ENCODE measurements at regions of chr1 and their contacts with region 1.

Region 1: GRCh38 chr1:156892190-156893047 is 1.1 kb upstream of the PEAR1 start:
- DNase-seq: peak; percentile 89
- CTCF ChIP-seq: peak; percentile 80

Region 2: DNA sequence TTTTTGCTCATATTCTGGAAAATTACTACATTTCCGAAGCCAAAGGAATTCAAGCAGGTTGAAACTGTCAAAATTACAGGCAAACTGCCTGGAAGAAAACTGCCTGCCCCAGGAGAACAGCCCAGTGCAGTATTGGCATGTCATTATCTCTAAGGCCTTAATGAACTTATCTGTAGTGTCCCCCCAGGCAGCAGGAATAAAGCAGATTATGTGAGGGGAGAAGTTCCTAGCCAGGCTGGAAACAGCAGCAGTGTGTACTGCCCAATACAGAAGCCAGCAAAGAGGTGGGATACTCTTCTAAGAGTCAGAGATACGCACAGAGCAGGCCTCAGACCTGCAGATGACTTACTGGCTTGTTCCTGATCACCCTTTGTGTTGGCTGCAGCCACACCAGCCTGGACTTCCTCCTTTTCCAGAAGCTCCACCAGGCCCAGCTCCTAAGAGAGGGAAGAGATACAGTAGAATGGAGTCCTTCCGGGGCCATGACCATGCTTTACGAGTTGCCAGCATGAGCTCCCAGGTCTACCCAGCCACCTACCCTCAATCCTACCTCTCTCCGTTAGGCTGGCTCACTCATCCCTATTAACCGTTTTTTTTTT is 331.7 kb before region 1 on chr1:
- CTCF ChIA-PET with region 1: no interaction called
- POLR2A ChIA-PET with region 1: no interaction called
- DNase-seq: no peak
- CTCF ChIP-seq: no peak

Region 3: GRCh38 chr1:156689035-156689952 is 203.1 kb before region 1 on chr1:
- CTCF ChIA-PET with region 1: interaction called, 108 read pairs
- POLR2A ChIA-PET with region 1: no interaction called
- DNase-seq: peak; percentile 87
- CTCF ChIP-seq: peak; percentile 87

Region 4: DNA sequence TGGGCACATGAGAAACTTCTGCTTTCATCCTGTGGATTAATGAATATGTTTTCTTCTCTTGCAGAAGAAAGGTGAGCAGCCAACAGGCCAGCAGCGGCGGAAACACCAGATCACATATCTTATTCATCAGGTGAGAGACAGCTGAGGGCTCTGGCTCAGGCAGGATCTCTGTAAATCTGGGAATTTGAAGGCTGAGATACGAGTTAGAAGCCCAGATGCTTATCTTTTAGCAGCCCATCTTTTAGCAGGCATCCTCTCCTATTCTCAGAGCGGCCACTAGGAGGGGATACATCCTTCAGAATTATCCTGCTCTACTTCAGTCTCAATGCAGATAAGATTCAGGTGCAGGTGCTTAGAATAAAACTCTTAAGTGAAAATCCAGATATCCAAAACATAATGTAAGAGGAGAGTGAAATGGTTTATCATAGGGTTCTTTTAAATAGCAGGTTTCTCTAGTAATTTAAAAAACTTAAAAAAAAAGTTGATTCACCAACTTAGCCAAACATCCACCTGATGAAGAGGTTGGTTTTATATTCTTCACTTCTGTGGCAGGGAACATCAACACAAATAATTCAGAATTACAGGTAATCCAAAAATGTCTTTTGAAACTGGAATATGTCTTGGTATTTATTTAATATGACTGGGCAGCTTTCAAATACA is 95.1 kb before region 1 on chr1:
- CTCF ChIA-PET with region 1: interaction called, 34 read pairs
- POLR2A ChIA-PET with region 1: no interaction called
- DNase-seq: peak; percentile 60
- CTCF ChIP-seq: peak; percentile 73

Region 5: GRCh38 chr1:156876281-156876680 is 16.1 kb before region 1 on chr1:
- CTCF ChIA-PET with region 1: interaction called, 34 read pairs
- POLR2A ChIA-PET with region 1: no interaction called
- DNase-seq: no peak
- CTCF ChIP-seq: no peak

Region 6: GRCh38 chr1:156927215-156928042 is 35.0 kb after region 1 on chr1:
- CTCF ChIA-PET with region 1: interaction called, 20 read pairs
- POLR2A ChIA-PET with region 1: no interaction called
- DNase-seq: peak; percentile 65
- CTCF ChIP-seq: peak; percentile 67